ENCODE measurements at regions of chr20 and their contacts with region 1.

Region 1: GRCh38 chr20:36144336-36144735 is 10.2 kb upstream of the EPB41L1 start:
- DNase-seq: no peak
- H3K4me3 ChIP-seq: no peak overlapping the region
- H3K27ac ChIP-seq: peak overlapping the region; percentile 75
- H3K4me1 ChIP-seq: peaks cover 55% of the 10 kb centered on the region
- H3K27me3 ChIP-seq: no peaks in the 10 kb centered on the region
- CTCF ChIP-seq: no peak

Region 2: DNA sequence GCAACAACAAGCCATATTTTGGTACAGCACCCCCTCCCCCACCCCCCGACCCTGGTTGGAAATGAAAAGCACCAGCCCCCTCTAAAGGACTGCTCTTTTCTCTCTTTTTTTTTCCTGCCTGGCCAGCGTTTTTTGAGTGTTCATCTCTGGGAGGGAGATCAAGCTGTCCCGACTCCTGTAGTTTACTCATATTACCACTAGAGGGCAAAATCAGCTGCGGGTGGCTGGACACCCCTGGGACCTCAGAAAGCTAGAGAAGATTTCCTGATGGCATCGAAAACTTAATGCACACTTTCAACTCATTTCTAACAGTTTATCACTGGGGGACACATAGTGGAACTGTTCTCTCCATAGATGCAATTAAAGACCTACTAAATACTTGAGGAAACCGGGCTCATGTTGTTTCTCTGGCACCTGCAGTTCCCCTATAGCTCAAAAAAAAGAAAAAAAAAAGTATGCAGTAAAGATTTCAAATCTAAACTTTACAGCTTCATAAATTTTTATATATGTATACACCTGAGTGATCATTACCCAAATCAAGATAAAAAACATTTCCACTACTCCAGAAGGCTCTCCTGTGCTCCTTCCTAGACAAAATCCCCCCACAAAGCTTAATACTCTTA is 151.5 kb before region 1 on chr20:
- intact Hi-C with region 1: loop called (anchors 2 kb)
- DNase-seq: no peak
- H3K4me3 ChIP-seq: no peak overlapping the region
- H3K27ac ChIP-seq: no peak overlapping the region
- H3K4me1 ChIP-seq: peaks cover 3% of the 10 kb centered on the region
- H3K27me3 ChIP-seq: no peaks in the 10 kb centered on the region
- CTCF ChIP-seq: peak; percentile 86

Region 3: GRCh38 chr20:36064658-36065426 is 79.5 kb before region 1 on chr20:
- intact Hi-C with region 1: no loop called
- DNase-seq: peak; percentile 96
- H3K4me3 ChIP-seq: peak overlapping the region; percentile 76
- H3K27ac ChIP-seq: peak overlapping the region; percentile 88
- H3K4me1 ChIP-seq: peaks cover 19% of the 10 kb centered on the region
- H3K27me3 ChIP-seq: no peaks in the 10 kb centered on the region
- CTCF ChIP-seq: no peak

Measured in left ventricle myocardium inferior (tissue), 1 donor.